CD4-positive, alpha-beta memory T cell (primary cell): ENCODE measurements at regions of chr1 and their contacts with region 1.

Region 1: GRCh38 chr1:164786980-164787833 is 228.2 kb downstream of the PBX1 start:
- DNase-seq: peak; percentile 33 to 41 (median 37)
- H3K4me3 ChIP-seq: no peak overlapping the region
- H3K4me3 Mint-ChIP-seq: no peak overlapping the region
- H3K27ac ChIP-seq: no peak overlapping the region
- H3K27ac Mint-ChIP-seq: no peak overlapping the region
- H3K4me1 ChIP-seq: no peaks in the 10 kb centered on the region
- H3K4me1 Mint-ChIP-seq: peaks cover 3 to 9% (median 5%) of the 10 kb centered on the region in 4 donors
- H3K27me3 ChIP-seq: no peaks in the 10 kb centered on the region
- H3K27me3 Mint-ChIP-seq: peaks cover 0 to 4% of the 10 kb centered on the region in 2 donors

Region 2: GRCh38 chr1:163528710-163529348 is 1258.4 kb before region 1 on chr1:
- CTCF ChIA-PET with region 1: no interaction called
- POLR2A ChIA-PET with region 1: no interaction called
- intact Hi-C with region 1: loop called (anchors 5 kb)
- DNase-seq: no peak
- H3K4me3 ChIP-seq: no peak overlapping the region
- H3K4me3 Mint-ChIP-seq: no peak overlapping the region
- H3K27ac ChIP-seq: no peak overlapping the region
- H3K27ac Mint-ChIP-seq: no peak overlapping the region
- H3K4me1 ChIP-seq: no peaks in the 10 kb centered on the region
- H3K4me1 Mint-ChIP-seq: no peaks in the 10 kb centered on the region
- H3K27me3 ChIP-seq: no peaks in the 10 kb centered on the region
- H3K27me3 Mint-ChIP-seq: peaks cover 0 to 1% of the 10 kb centered on the region in 2 donors

Region 3: GRCh38 chr1:164726235-164726634 is 61.0 kb before region 1 on chr1:
- CTCF ChIA-PET with region 1: no interaction called
- POLR2A ChIA-PET with region 1: no interaction called
- intact Hi-C with region 1: no loop called
- DNase-seq: no peak
- H3K4me3 ChIP-seq: no peak overlapping the region
- H3K4me3 Mint-ChIP-seq: no peak overlapping the region
- H3K27ac ChIP-seq: no peak overlapping the region
- H3K27ac Mint-ChIP-seq: no peak overlapping the region
- H3K4me1 ChIP-seq: no peaks in the 10 kb centered on the region
- H3K4me1 Mint-ChIP-seq: peaks cover 0 to under 1% (median under 1%) of the 10 kb centered on the region in 4 donors
- H3K27me3 ChIP-seq: no peaks in the 10 kb centered on the region
- H3K27me3 Mint-ChIP-seq: peaks cover 0 to 2% of the 10 kb centered on the region in 2 donors

Region 4: DNA sequence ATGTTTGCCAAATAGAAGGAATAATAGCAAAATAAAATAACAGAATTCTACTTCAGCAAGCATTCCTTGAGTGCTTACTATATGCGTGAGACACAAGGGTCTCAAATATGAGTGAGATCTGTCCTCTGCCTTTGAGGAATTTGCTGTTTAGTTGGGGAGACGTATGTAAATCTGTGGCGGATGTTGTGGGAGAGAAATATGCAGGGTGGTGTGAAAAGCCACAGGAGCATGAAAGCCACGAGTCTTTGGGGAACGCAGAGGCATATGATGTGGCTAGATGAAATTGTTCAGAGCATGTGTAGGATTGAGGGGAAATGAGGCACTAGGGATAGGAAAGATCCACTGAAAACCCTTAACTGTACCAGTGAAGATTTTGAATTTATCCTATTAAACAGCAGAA is 16.2 kb after region 1 on chr1:
- CTCF ChIA-PET with region 1: interaction called, 21 read pairs
- POLR2A ChIA-PET with region 1: no interaction called
- intact Hi-C with region 1: no loop called
- DNase-seq: no peak
- H3K4me3 ChIP-seq: no peak overlapping the region
- H3K4me3 Mint-ChIP-seq: no peak overlapping the region
- H3K27ac ChIP-seq: no peak overlapping the region
- H3K27ac Mint-ChIP-seq: no peak overlapping the region
- H3K4me1 ChIP-seq: no peaks in the 10 kb centered on the region
- H3K4me1 Mint-ChIP-seq: no peaks in the 10 kb centered on the region
- H3K27me3 ChIP-seq: no peaks in the 10 kb centered on the region
- H3K27me3 Mint-ChIP-seq: peaks cover 0 to 1% of the 10 kb centered on the region in 2 donors

Region 5: GRCh38 chr1:164813776-164814175 is 26.6 kb after region 1 on chr1:
- CTCF ChIA-PET with region 1: no interaction called
- POLR2A ChIA-PET with region 1: no interaction called
- intact Hi-C with region 1: no loop called
- DNase-seq: no peak
- H3K4me3 ChIP-seq: no peak overlapping the region
- H3K4me3 Mint-ChIP-seq: no peak overlapping the region
- H3K27ac ChIP-seq: no peak overlapping the region
- H3K27ac Mint-ChIP-seq: no peak overlapping the region
- H3K4me1 ChIP-seq: no peaks in the 10 kb centered on the region
- H3K4me1 Mint-ChIP-seq: no peaks in the 10 kb centered on the region
- H3K27me3 ChIP-seq: no peaks in the 10 kb centered on the region
- H3K27me3 Mint-ChIP-seq: no peaks in the 10 kb centered on the region